ENCODE measurements at regions of chr15 and their contacts with region 1.

Region 1: DNA sequence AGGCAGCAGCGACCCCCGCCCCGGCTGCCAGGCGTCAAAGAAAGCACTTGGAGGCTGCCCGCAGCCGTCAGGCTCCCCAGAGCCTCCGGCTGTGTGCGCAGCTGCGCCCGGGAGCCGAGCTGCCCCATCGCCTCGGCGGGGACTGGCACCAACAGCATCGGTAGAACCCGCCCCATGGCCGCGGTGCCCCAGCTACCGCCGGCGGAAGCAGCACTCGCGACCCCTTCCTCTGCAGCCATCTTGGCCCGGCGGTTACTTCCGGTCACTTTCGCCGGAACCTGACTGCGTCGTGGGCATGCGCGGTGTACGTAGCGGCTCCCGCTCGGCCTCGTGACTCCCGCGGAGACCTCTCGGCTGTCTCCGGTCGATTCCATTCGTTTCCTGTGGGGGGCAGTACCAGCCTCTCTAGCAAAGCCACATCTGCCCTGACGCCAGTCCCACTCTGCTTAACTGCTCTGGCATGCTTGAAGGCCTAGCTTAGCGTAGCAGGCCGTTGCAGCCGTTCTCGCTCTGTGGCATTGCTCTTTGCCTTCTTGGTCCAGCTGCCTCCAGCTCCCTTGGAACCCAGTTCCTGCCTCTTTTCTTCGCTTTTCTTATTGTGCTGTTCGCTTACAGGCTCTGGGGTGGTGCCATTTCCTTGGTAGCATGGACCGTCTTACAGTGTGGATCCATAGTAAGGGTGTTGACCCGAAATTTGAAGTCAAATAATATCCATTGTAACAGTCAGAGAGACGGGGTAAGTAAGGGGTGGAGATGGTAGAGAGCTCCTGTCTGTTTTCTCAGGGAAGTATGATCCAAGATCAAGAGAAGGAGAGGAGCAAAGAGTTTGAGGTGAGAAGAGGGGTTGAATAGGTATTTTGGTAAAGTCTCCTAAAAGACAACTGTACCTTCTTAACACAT is at the start of gene SPG11:
- DNase-seq: peak; percentile 99
- H3K4me3 ChIP-seq: peak within 1 kb of the TSS; percentile 81 to 97 (median 90)
- H3K27ac ChIP-seq: peak within 1 kb of the TSS; percentile 91 to 100 (median 100)
- H3K4me1 ChIP-seq: peaks cover 15 to 90% (median 70%) of the 10 kb centered on the region in 6 donors
- H3K27me3 ChIP-seq: no peaks in the 10 kb centered on the region
- CTCF ChIP-seq: peak; percentile 94 to 100 (median 99)
- POLR2A ChIP-seq: peak; percentile 49 to 82 (median 67)
- total RNA-seq, gene SPG11: 119 to 218 (median 143) TPM

Region 2: GRCh38 chr15:44711356-44712107 is 47.9 kb after region 1 on chr15 and contains the start of gene B2M:
- intact Hi-C with region 1: loop called (anchors 5 kb)
- DNase-seq: peak; percentile 96
- H3K4me3 ChIP-seq: peak within 1 kb of the TSS; percentile 68 to 96 (median 89)
- H3K27ac ChIP-seq: peak within 1 kb of the TSS; percentile 98 to 100 (median 100)
- H3K4me1 ChIP-seq: peaks cover 27 to 68% (median 46%) of the 10 kb centered on the region in 6 donors
- H3K27me3 ChIP-seq: no peaks in the 10 kb centered on the region
- CTCF ChIP-seq: peak in 3 of 11 experiments; percentile 11 to 26 (median 16)
- POLR2A ChIP-seq: peak; percentile 96 to 100 (median 99)
- total RNA-seq, gene B2M: 5,238 to 10,333 (median 6,268) TPM

Region 3: DNA sequence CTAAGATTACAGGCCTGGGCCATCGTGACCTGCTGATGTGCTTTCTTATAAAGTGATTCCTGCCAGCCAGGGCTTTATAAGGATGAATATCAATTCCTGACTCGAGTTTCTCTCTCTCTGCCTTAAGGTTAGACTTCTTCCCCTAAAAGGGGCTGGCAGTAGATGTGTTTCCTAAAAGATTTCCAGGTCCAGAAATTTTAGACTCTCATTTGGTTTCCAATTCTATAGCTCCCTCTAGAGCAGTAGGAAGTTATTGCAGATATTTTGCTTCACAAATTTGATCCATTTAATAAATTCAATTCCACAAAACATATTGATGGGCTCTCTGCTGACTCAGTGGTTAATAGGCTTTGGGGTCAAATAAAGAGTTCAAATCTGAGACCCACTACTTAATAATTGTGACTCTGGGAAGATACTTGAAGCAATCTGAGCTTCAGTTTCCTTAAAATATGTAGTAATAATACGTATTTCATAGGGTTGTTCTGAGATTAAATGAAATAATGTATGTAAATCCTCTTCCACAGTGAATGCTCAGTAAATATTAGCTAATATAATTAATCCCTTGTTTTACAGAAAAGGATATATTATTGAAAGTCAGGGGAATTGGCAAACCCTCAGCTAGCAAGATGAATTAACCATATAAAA is 74.8 kb after region 1 on chr15:
- intact Hi-C with region 1: loop called (anchors 5 kb)
- DNase-seq: no peak
- H3K4me3 ChIP-seq: no peak overlapping the region
- H3K27ac ChIP-seq: peak overlapping the region in 3 of 8 donors; percentile 33 to 88 (median 51)
- H3K4me1 ChIP-seq: peaks cover 19 to 59% (median 47%) of the 10 kb centered on the region in 6 donors
- H3K27me3 ChIP-seq: no peaks in the 10 kb centered on the region
- CTCF ChIP-seq: peak; percentile 39 to 81 (median 76)
- POLR2A ChIP-seq: no peak

Measured in spleen (tissue), 13 donors.